Naive thymus-derived CD4-positive, alpha-beta T cell (primary cell): ENCODE measurements at regions of chr17 and their contacts with region 1.

Region 1: GRCh38 chr17:4480929-4481898 is 17.5 kb upstream of the SPNS2 start:
- DNase-seq: peak in 6 of 9 donors; percentile 18 to 50 (median 30)
- ATAC-seq: peak; percentile 74
- H3K4me3 ChIP-seq: peak overlapping the region; percentile 51
- H3K4me3 Mint-ChIP-seq: peak overlapping the region; percentile 63 to 89 (median 84)
- H3K27ac ChIP-seq: peak overlapping the region; percentile 53
- H3K27ac Mint-ChIP-seq: peak overlapping the region; percentile 88 to 97 (median 92)
- H3K4me1 ChIP-seq: peaks cover 28% of the 10 kb centered on the region in 2 donors
- H3K4me1 Mint-ChIP-seq: peaks cover 27 to 59% (median 48%) of the 10 kb centered on the region in 7 donors
- H3K27me3 ChIP-seq: no peaks in the 10 kb centered on the region
- H3K27me3 Mint-ChIP-seq: no peaks in the 10 kb centered on the region

Region 2: GRCh38 chr17:3927628-3928340 is 553.4 kb before region 1 on chr17:
- CTCF ChIA-PET with region 1: no interaction called
- POLR2A ChIA-PET with region 1: no interaction called
- intact Hi-C with region 1: no loop called
- DNase-seq: no peak
- ATAC-seq: no peak
- H3K4me3 ChIP-seq: no peak overlapping the region
- H3K4me3 Mint-ChIP-seq: no peak overlapping the region
- H3K27ac ChIP-seq: peak overlapping the region; percentile 24
- H3K27ac Mint-ChIP-seq: peak overlapping the region in 2 of 9 donors; percentile 20 to 43
- H3K4me1 ChIP-seq: no peaks in the 10 kb centered on the region
- H3K4me1 Mint-ChIP-seq: peaks cover 0 to 5% (median 0%) of the 10 kb centered on the region in 7 donors
- H3K27me3 ChIP-seq: no peaks in the 10 kb centered on the region
- H3K27me3 Mint-ChIP-seq: no peaks in the 10 kb centered on the region

Region 3: GRCh38 chr17:4498461-4499397 is 17.5 kb after region 1 on chr17 and contains the start of gene SPNS2:
- CTCF ChIA-PET with region 1: interaction called, 3 read pairs
- POLR2A ChIA-PET with region 1: interaction called, 10 read pairs
- intact Hi-C with region 1: loop called in 1 of 2 experiments (anchors 1 kb)
- DNase-seq: peak; percentile 46 to 74 (median 66)
- ATAC-seq: peak; percentile 96
- H3K4me3 ChIP-seq: peak within 1 kb of the TSS; percentile 48
- H3K4me3 Mint-ChIP-seq: peak within 1 kb of the TSS; percentile 77 to 92 (median 84)
- H3K27ac ChIP-seq: no peak within 1 kb of the TSS
- H3K27ac Mint-ChIP-seq: no peak within 1 kb of the TSS
- H3K4me1 ChIP-seq: peaks cover 15 to 17% of the 10 kb centered on the region in 2 donors
- H3K4me1 Mint-ChIP-seq: peaks cover 13 to 26% (median 23%) of the 10 kb centered on the region in 7 donors
- H3K27me3 ChIP-seq: peaks cover 0 to 14% of the 10 kb centered on the region in 2 donors
- H3K27me3 Mint-ChIP-seq: peaks cover 15 to 52% (median 26%) of the 10 kb centered on the region in 5 donors
- total RNA-seq, gene SPNS2: 0.19 to 0.56 (median 0.50) TPM in 4 of 5 experiments, not detected in the other

Region 4: DNA sequence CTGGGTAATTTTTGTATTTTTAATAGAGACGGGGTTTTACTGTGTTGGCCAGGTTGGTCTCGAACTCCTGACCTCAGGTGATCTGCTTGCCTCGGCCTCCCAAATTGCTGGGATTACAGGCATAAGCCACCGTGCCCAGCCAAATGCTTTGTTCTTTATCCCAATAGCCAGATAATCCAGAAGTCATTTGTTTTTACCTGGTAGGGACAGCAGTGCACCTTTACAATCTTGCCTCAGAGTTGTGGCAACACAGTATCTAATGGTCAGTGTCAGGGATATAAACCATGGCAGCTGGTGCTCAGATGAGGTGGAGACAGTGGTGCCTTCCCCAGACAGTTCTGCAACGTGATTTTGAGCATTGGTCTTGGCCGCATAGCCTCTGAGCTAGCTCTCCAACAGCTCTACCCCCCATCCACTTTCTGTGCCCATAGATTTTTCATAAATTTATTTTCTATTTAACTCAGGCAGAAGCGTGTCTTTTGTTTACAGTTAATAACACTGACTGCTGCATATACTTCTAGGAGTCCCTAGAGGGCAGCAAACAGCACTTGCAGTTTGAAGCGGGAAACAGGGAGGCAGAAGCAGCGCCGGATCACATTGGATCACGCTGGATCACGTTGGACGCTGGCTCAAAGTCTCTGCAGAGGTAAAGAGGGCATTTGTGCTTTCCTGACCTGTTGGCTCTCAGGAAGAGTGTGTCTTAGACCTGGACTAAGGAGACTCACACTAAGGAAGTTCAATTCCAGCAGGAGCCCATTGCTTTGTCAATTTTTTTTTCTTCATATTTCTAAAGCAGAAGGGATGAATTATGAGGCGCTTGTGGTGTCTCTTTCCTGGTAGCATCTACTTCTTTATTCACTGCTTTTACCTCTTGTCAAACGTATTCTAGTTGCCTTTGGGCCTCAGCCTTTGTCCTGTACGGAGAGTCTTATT is 84.3 kb after region 1 on chr17:
- CTCF ChIA-PET with region 1: no interaction called
- POLR2A ChIA-PET with region 1: no interaction called
- intact Hi-C with region 1: no loop called
- DNase-seq: peak in 8 of 9 donors; percentile 29 to 60 (median 50)
- ATAC-seq: peak; percentile 90
- H3K4me3 ChIP-seq: no peak overlapping the region
- H3K4me3 Mint-ChIP-seq: peak overlapping the region in 9 of 10 donors; percentile 44 to 77 (median 70)
- H3K27ac ChIP-seq: no peak overlapping the region
- H3K27ac Mint-ChIP-seq: peak overlapping the region in 3 of 9 donors; percentile 15 to 41 (median 21)
- H3K4me1 ChIP-seq: peaks cover 7 to 11% of the 10 kb centered on the region in 2 donors
- H3K4me1 Mint-ChIP-seq: peaks cover 15 to 40% (median 33%) of the 10 kb centered on the region in 7 donors
- H3K27me3 ChIP-seq: no peaks in the 10 kb centered on the region
- H3K27me3 Mint-ChIP-seq: peaks cover 0 to 17% (median 0%) of the 10 kb centered on the region in 5 donors